SK-N-SH (cell line): ENCODE measurements at regions of chr10 and their contacts with region 1.

Region 1: GRCh38 chr10:6445501-6446316 is 134.4 kb downstream of the PRKCQ start:
- DNase-seq: peak; percentile 38
- H3K4me3 ChIP-seq: no peak overlapping the region
- H3K27ac ChIP-seq: no peak overlapping the region
- H3K4me1 ChIP-seq: no peaks in the 10 kb centered on the region
- H3K27me3 ChIP-seq: peaks cover 5% of the 10 kb centered on the region; the same call in 1 of the 2 replicates
- CTCF ChIP-seq: peak; percentile 70
- EP300 ChIP-seq: no peak
- RAD21 ChIP-seq: peak; percentile 61

Region 2: GRCh38 chr10:6430423-6430980 is 15.2 kb before region 1 on chr10:
- CTCF ChIA-PET with region 1: interaction called, 10 read pairs
- POLR2A ChIA-PET with region 1: no interaction called
- DNase-seq: no peak
- H3K4me3 ChIP-seq: no peak overlapping the region
- H3K27ac ChIP-seq: no peak overlapping the region
- H3K4me1 ChIP-seq: no peaks in the 10 kb centered on the region
- H3K27me3 ChIP-seq: peaks cover 11% of the 10 kb centered on the region; the same call in 1 of the 2 replicates
- CTCF ChIP-seq: no peak
- EP300 ChIP-seq: no peak
- RAD21 ChIP-seq: no peak

Region 3: GRCh38 chr10:6456067-6456466 is 10.4 kb after region 1 on chr10:
- CTCF ChIA-PET with region 1: interaction called, 11 read pairs
- POLR2A ChIA-PET with region 1: no interaction called
- DNase-seq: no peak
- H3K4me3 ChIP-seq: no peak overlapping the region
- H3K27ac ChIP-seq: no peak overlapping the region
- H3K4me1 ChIP-seq: no peaks in the 10 kb centered on the region
- H3K27me3 ChIP-seq: no peaks in the 10 kb centered on the region
- CTCF ChIP-seq: no peak
- EP300 ChIP-seq: no peak
- RAD21 ChIP-seq: no peak